ENCODE measurements at regions of chr13 and their contacts with region 1.

Region 1: DNA sequence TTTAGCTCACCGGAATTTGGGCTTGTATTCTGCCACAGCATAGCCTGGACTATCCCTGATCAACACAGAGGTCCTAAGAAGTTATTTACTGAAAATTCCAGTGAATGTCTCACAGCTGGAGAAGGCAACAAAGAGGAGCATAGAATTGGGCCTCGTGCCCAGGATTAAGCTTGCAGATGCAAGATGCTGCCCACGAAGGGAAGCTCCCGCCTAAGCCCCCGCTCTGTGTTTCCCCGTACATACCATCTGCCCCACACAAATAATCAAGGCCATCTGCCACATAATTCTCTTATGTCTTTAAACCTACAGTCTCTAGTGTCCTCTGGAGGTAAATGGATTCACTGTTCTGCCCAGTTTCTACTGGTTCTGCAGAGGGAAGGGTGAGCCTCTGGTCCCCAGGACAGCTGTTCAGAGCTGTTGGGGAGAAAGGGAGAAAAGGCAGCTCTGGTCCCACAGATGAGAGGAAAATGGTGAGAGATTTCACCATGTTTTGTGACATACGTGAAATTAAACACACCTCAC is 7.4 kb upstream of the TPP2 start:
- DNase-seq: no peak
- ATAC-seq: no peak
- H3K4me3 ChIP-seq: no peak overlapping the region
- H3K27ac ChIP-seq: no peak overlapping the region
- H3K4me1 ChIP-seq: peaks cover 0 to 25% (median 13%) of the 10 kb centered on the region in 9 donors
- H3K27me3 ChIP-seq: peaks cover 0 to 11% (median 0%) of the 10 kb centered on the region in 7 donors
- CTCF ChIP-seq: no peak

Region 2: DNA sequence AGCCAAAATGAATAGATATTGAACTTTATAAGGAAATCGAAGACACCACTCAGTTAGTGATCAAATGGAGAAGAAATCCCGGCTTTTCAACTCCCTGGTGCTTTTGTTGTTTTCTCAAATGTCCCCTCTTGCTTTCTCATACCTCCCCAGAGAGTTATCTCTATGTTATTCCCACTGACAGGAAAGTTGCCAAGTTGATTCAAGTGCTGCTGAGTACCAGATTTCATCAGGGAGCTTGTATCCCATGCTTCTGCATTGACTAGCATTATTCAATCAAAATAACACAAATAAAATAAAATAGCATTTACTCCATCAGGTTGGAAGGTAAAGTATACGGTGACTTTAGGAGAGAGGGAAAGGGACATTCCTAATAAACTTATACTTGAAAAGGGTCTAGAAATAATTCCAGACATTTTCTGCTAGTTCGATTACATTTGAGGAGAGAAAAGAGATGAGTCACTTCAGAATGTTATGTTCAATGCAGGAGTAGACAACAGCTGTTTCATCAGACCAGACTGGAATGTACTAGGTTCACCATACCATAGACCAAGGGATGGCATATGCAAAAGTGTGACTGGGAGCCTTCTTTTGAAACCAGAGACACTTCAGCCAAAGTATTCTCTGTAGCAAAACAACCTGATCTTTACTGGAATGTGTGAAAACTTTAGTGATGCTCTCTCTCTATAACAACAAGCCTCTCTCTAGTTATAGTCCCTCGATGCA is 585.4 kb before region 1 on chr13:
- intact Hi-C with region 1: no loop called
- DNase-seq: no peak
- ATAC-seq: peak in 1 of 8 donors; percentile 45
- H3K4me3 ChIP-seq: no peak overlapping the region
- H3K27ac ChIP-seq: peak overlapping the region in 7 of 10 donors; percentile 2 to 66 (median 49)
- H3K4me1 ChIP-seq: peaks cover 0 to 31% (median 20%) of the 10 kb centered on the region in 9 donors
- H3K27me3 ChIP-seq: no peaks in the 10 kb centered on the region
- CTCF ChIP-seq: no peak

Region 3: GRCh38 chr13:102536695-102537485 is 52.5 kb before region 1 on chr13:
- intact Hi-C with region 1: no loop called
- DNase-seq: no peak
- ATAC-seq: no peak
- H3K4me3 ChIP-seq: no peak overlapping the region
- H3K27ac ChIP-seq: no peak overlapping the region
- H3K4me1 ChIP-seq: no peaks in the 10 kb centered on the region
- H3K27me3 ChIP-seq: peaks cover 0 to 7% (median 0%) of the 10 kb centered on the region in 7 donors
- CTCF ChIP-seq: no peak

Region 4: GRCh38 chr13:102724923-102725322 is 135.6 kb after region 1 on chr13:
- intact Hi-C with region 1: loop called in 6 of 10 experiments (anchors 5 to 10 kb)
- DNase-seq: no peak
- ATAC-seq: peak in 3 of 8 donors; percentile 48 to 70 (median 63)
- H3K4me3 ChIP-seq: no peak overlapping the region
- H3K27ac ChIP-seq: no peak overlapping the region
- H3K4me1 ChIP-seq: peaks cover 0 to 6% (median 0%) of the 10 kb centered on the region in 9 donors
- H3K27me3 ChIP-seq: no peaks in the 10 kb centered on the region
- CTCF ChIP-seq: peak in 7 of 9 donors; percentile 12 to 44 (median 38)

Region 5: DNA sequence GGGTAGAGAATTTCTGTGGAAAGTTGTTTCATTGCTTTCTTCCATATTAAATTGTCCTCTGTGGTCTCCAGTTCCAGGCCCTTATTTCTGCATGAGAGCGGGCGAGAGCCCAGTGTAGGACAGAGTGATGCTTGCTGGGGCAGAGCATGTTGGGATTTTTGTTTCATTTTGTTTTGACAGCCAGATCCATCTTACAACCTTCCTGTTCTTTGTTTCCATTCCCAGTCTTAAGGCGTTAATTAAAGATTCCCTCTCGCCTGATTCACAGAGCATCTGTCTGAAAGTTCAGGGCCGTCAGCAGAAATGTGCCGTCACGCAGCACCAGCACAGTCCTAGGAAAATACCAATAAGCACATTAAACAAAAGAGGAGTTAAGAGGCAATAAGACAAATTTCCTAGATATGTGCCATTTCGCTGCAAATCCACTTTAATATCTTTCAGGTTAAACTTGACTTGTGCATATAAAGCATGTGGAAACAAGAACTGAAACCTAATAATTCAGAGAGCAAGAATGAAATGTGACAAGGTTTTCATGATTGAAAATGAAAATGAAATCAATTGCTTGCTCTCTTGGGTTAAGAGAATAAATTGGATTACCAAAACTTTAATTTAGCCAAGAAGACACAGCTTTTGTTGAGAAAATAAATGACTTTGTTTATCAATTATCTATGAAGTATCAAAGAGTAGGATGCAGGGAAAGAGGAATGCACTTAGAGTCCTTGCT is 687.6 kb after region 1 on chr13:
- intact Hi-C with region 1: no loop called
- DNase-seq: no peak
- ATAC-seq: no peak
- H3K4me3 ChIP-seq: no peak overlapping the region
- H3K27ac ChIP-seq: no peak overlapping the region
- H3K4me1 ChIP-seq: no peaks in the 10 kb centered on the region
- H3K27me3 ChIP-seq: no peaks in the 10 kb centered on the region
- CTCF ChIP-seq: no peak

Measured in heart right ventricle (tissue), 16 donors.